ENCODE measurements at regions of chr22 and their contacts with region 1.

Region 1: GRCh38 chr22:39013942-39014722 is at the start of gene APOBEC3C:
- DNase-seq: peak; percentile 74 to 94 (median 82)
- ATAC-seq: peak; percentile 94
- H3K4me3 ChIP-seq: peak within 1 kb of the TSS; percentile 75
- H3K27ac ChIP-seq: peak within 1 kb of the TSS; percentile 89
- H3K4me1 ChIP-seq: peaks cover 15 to 46% of the 10 kb centered on the region in 2 experiments; a peak in 4 of 5 replicates
- H3K27me3 ChIP-seq: no peaks in the 10 kb centered on the region
- CTCF ChIP-seq: peak in 2 of 3 experiments; percentile 19 to 25; a peak in 2 of 6 replicates
- EP300 ChIP-seq: peak; percentile 81; the same call in 1 of the 2 replicates
- POLR2A ChIP-seq: peak; percentile 81
- RAD21 ChIP-seq: peak; percentile 11 to 57; a peak in 2 of 4 replicates
- polyA plus RNA-seq, gene APOBEC3C: 226 to 285 TPM

Region 2: GRCh38 chr22:38872172-38872830 is 141.8 kb before region 1 on chr22 and contains the start of gene CBX6:
- CTCF ChIA-PET with region 1: no interaction called
- POLR2A ChIA-PET with region 1: no interaction called
- in situ Hi-C with region 1: no loop called
- intact Hi-C with region 1: loop called (anchors 5 kb)
- DNase-seq: peak; percentile 92 to 95 (median 93)
- ATAC-seq: peak; percentile 70
- H3K4me3 ChIP-seq: peak within 1 kb of the TSS; percentile 62
- H3K27ac ChIP-seq: peak within 1 kb of the TSS; percentile 68
- H3K4me1 ChIP-seq: peaks cover 13 to 27% of the 10 kb centered on the region in 2 experiments
- H3K27me3 ChIP-seq: peaks cover 0 to 5% of the 10 kb centered on the region in 2 experiments; a peak in 2 of 5 replicates
- CTCF ChIP-seq: no peak
- EP300 ChIP-seq: no peak
- POLR2A ChIP-seq: no peak; the same call in 1 of the 2 replicates
- RAD21 ChIP-seq: no peak
- polyA plus RNA-seq, gene CBX6: 0.75 to 1.2 TPM

Region 3: GRCh38 chr22:39028281-39028680 is 14.1 kb after region 1 on chr22:
- CTCF ChIA-PET with region 1: no interaction called
- POLR2A ChIA-PET with region 1: no interaction called
- in situ Hi-C with region 1: no loop called
- intact Hi-C with region 1: no loop called
- DNase-seq: no peak
- ATAC-seq: no peak
- H3K4me3 ChIP-seq: no peak overlapping the region
- H3K27ac ChIP-seq: no peak overlapping the region
- H3K4me1 ChIP-seq: peaks cover 3 to 15% of the 10 kb centered on the region in 2 experiments; a peak in 3 of 5 replicates
- H3K27me3 ChIP-seq: no peaks in the 10 kb centered on the region
- CTCF ChIP-seq: no peak
- EP300 ChIP-seq: no peak
- POLR2A ChIP-seq: no peak
- RAD21 ChIP-seq: no peak

Region 4: GRCh38 chr22:39068033-39068791 is 54.1 kb after region 1 on chr22:
- CTCF ChIA-PET with region 1: no interaction called
- POLR2A ChIA-PET with region 1: no interaction called
- in situ Hi-C with region 1: no loop called
- intact Hi-C with region 1: loop called (anchors 10 kb)
- DNase-seq: no peak
- ATAC-seq: peak; percentile 65
- H3K4me3 ChIP-seq: no peak overlapping the region
- H3K27ac ChIP-seq: no peak overlapping the region
- H3K4me1 ChIP-seq: no peaks in the 10 kb centered on the region; a peak in 2 of 5 replicates
- H3K27me3 ChIP-seq: no peaks in the 10 kb centered on the region
- CTCF ChIP-seq: peak in 1 of 3 experiments; percentile 16; a peak in 2 of 6 replicates
- EP300 ChIP-seq: no peak
- POLR2A ChIP-seq: no peak
- RAD21 ChIP-seq: no peak

Region 5: GRCh38 chr22:39117585-39118191 is 103.6 kb after region 1 on chr22:
- CTCF ChIA-PET with region 1: no interaction called
- POLR2A ChIA-PET with region 1: no interaction called
- in situ Hi-C with region 1: loop called (anchors 5 kb)
- intact Hi-C with region 1: loop called (anchors 2 kb)
- DNase-seq: peak; percentile 30 to 68 (median 38)
- ATAC-seq: peak; percentile 58; the same call in 2 of the 3 replicates
- H3K4me3 ChIP-seq: no peak overlapping the region
- H3K27ac ChIP-seq: no peak overlapping the region
- H3K4me1 ChIP-seq: no peaks in the 10 kb centered on the region; a peak in 2 of 5 replicates
- H3K27me3 ChIP-seq: no peaks in the 10 kb centered on the region
- CTCF ChIP-seq: peak; percentile 49 to 66 (median 63); a peak in 5 of 6 replicates
- EP300 ChIP-seq: no peak
- POLR2A ChIP-seq: no peak
- RAD21 ChIP-seq: peak; percentile 42 to 83